Mammary epithelial cell (primary cell): ENCODE measurements at regions of chr14 and their contacts with region 1.

Region 1: GRCh38 chr14:35247777-35248475 is 44.3 kb upstream of the PSMA6 start:
- DNase-seq: no peak
- H3K4me3 ChIP-seq: no peak overlapping the region
- H3K27ac ChIP-seq: no peak overlapping the region
- H3K4me1 ChIP-seq: no peaks in the 10 kb centered on the region
- H3K27me3 ChIP-seq: no peaks in the 10 kb centered on the region
- CTCF ChIP-seq: no peak

Region 2: GRCh38 chr14:35073486-35073885 is 174.4 kb before region 1 on chr14:
- CTCF ChIA-PET with region 1: no interaction called
- dilution Hi-C with region 1: no loop called
- in situ Hi-C with region 1: no loop called
- intact Hi-C with region 1: no loop called
- DNase-seq: no peak
- H3K4me3 ChIP-seq: no peak overlapping the region
- H3K27ac ChIP-seq: no peak overlapping the region
- H3K4me1 ChIP-seq: no peaks in the 10 kb centered on the region
- H3K27me3 ChIP-seq: no peaks in the 10 kb centered on the region
- CTCF ChIP-seq: no peak

Region 3: DNA sequence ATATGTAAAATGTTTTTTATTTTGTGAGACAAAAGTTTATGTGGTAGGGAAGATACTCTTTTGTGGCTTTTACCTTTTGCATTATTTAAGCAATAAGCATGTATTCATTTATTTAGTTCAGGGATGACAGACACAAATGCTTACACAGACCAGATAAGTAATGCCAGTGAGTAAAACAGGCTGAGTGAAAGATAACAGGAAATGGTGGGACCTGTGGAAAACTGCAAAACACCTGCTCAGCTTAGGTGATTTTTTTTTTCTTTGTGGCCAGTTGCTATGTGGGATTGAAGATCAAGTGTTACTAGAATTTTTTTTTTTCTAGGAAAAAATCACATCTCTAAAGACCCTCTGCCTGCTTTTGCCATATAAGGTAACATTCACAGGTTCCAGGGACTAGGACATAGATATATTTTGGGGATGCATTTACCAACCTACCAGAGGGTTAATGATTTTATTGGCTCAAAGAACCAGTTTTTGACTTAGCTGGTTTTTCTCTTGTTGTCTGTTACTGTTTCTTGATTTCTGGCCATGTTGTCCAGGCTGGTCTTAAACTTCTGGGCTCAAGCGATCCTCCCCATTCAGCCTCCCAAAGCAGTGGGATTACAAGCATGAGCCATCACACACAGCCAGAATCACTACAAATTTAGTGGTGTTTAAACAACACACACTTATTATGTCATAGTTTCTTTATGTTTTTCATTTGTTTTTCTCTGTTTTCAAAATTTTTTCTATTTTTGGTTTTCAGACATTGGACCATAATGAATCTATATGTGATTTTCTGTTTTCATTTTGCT is 54.0 kb after region 1 on chr14:
- CTCF ChIA-PET with region 1: no interaction called
- dilution Hi-C with region 1: loop called (anchors 5 kb)
- in situ Hi-C with region 1: no loop called
- intact Hi-C with region 1: no loop called
- DNase-seq: no peak
- H3K4me3 ChIP-seq: no peak overlapping the region
- H3K27ac ChIP-seq: no peak overlapping the region
- H3K4me1 ChIP-seq: peaks cover 3% of the 10 kb centered on the region
- H3K27me3 ChIP-seq: no peaks in the 10 kb centered on the region
- CTCF ChIP-seq: no peak

Region 4: DNA sequence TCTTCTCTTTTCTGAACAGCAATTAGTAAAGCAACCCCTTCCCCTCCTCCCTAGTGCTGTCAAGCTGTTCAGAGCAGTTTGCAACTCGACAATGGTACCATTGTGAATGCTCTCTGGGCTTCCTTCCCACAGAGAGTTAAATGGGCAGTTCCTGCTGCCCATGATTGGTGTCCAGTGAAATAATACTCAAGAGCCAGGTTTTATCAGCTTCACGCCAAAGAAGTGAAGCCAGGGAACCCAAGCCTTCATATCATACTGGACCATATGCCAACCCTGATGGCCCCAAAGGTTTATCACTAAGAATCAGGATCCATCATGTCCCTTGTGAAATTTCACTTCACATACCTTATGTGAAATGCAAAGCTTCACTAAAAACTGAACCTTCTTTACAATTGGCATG is 310.8 kb after region 1 on chr14:
- CTCF ChIA-PET with region 1: no interaction called
- dilution Hi-C with region 1: no loop called
- in situ Hi-C with region 1: no loop called
- intact Hi-C with region 1: no loop called
- DNase-seq: no peak
- H3K4me3 ChIP-seq: no peak overlapping the region
- H3K27ac ChIP-seq: no peak overlapping the region
- H3K4me1 ChIP-seq: no peaks in the 10 kb centered on the region
- H3K27me3 ChIP-seq: no peaks in the 10 kb centered on the region
- CTCF ChIP-seq: no peak